Gastrocnemius medialis (tissue), 4 donors: ENCODE measurements at regions of chr12 and their contacts with region 1.

Region 1: GRCh38 chr12:67892259-67893021 is 96.8 kb upstream of the IFNG-AS1 start:
- DNase-seq: no peak
- ATAC-seq: no peak
- H3K4me3 ChIP-seq: no peak overlapping the region
- H3K27ac ChIP-seq: peak overlapping the region; percentile 52 to 69 (median 58)
- H3K4me1 ChIP-seq: peaks cover 23 to 34% of the 10 kb centered on the region in 2 donors
- H3K27me3 ChIP-seq: no peaks in the 10 kb centered on the region
- CTCF ChIP-seq: no peak
- POLR2A ChIP-seq: no peak

Region 2: GRCh38 chr12:67747869-67748742 is 144.3 kb before region 1 on chr12:
- in situ Hi-C with region 1: no loop called
- intact Hi-C with region 1: loop called (anchors 10 kb)
- DNase-seq: peak; percentile 54 to 73
- ATAC-seq: peak; percentile 79 to 84
- H3K4me3 ChIP-seq: no peak overlapping the region
- H3K27ac ChIP-seq: peak overlapping the region; percentile 54 to 66 (median 58)
- H3K4me1 ChIP-seq: peaks cover 18 to 30% of the 10 kb centered on the region in 2 donors
- H3K27me3 ChIP-seq: no peaks in the 10 kb centered on the region
- CTCF ChIP-seq: no peak
- POLR2A ChIP-seq: no peak

Region 3: GRCh38 chr12:67788118-67788517 is 104.3 kb before region 1 on chr12:
- in situ Hi-C with region 1: no loop called
- intact Hi-C with region 1: no loop called
- DNase-seq: no peak
- ATAC-seq: peak; percentile 61 to 88
- H3K4me3 ChIP-seq: no peak overlapping the region
- H3K27ac ChIP-seq: peak overlapping the region in 1 of 4 donors; percentile 1
- H3K4me1 ChIP-seq: peaks cover 39 to 40% of the 10 kb centered on the region in 2 donors
- H3K27me3 ChIP-seq: no peaks in the 10 kb centered on the region
- CTCF ChIP-seq: no peak
- POLR2A ChIP-seq: no peak